ENCODE measurements at regions of chr11 and their contacts with region 1.

Region 1: DNA sequence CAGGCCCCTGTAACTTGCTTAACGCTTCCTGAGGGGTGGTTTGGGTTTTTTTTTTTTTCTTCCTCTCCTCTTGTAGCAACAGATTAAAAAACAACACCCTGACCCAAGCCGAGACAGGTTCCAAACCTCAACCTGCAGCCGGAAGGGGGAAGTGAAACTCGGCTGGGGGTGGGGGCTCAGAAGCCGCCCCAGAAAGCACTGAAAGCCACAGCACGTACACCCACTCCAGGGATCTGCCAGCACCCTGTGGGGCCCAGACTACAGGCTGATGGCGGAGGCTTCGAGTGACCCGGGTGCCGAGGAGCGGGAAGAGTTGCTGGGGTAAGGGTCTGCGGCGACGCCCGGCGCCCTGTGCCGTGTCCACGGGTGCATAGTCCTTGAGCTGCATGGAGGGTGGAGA is at the start of gene LSP1:
- DNase-seq: peak; percentile 83
- ATAC-seq: peak; percentile 64
- H3K4me3 Mint-ChIP-seq: peak within 1 kb of the TSS; percentile 99
- H3K27ac Mint-ChIP-seq: peak within 1 kb of the TSS; percentile 98
- H3K4me1 Mint-ChIP-seq: peaks cover 84% of the 10 kb centered on the region
- H3K27me3 Mint-ChIP-seq: no peaks in the 10 kb centered on the region
- CTCF ChIP-seq: no peak
- total RNA-seq, gene LSP1: 301 and 303 TPM in 2 replicates

Region 2: DNA sequence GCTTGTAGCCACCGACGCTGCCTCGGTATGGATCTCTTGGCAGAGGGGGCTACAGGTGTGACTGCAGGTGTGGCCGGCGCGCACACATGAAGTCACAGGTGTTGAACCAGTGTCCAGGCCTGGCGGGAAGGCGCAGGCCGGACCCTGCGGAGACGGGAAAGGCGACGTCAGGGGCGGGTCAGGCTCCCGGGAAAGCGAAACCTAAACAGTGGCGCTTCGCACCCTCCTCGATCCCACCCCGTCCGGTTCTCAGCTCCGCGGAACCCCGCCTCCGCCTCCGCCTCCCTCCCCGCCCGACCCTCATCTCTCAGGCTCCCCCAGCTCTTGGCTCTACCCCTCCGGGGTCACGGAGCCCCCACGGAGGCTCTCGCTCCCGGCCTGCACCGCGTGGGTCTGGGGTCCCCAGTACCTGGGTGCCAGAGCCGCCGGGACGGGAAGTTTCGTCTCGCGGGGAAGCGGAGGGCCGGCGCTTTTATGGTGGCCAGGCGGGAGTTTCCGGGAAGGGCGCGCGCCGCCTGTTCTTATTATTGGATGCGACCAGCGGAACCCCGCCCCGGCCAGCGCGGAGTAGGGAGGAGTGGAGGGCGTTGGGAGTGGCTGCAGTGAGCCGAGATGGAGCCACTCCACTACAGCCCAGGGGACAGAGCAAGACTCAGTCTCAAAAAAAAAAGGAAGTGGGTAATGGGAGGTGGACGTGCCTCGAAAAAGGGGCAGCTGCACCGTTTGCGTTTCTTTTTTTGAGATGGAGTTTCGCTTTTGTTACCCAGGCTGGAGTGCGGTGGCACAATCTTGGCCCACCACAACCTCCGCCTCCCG is 1237.2 kb before region 1 on chr11 and contains the start of gene IRF7:
- CTCF ChIA-PET with region 1: no interaction called
- POLR2A ChIA-PET with region 1: no interaction called
- intact Hi-C with region 1: loop called (anchors 10 kb)
- DNase-seq: peak; percentile 92
- ATAC-seq: peak; percentile 95
- H3K4me3 Mint-ChIP-seq: peak within 1 kb of the TSS; percentile 90
- H3K27ac Mint-ChIP-seq: peak within 1 kb of the TSS; percentile 88
- H3K4me1 Mint-ChIP-seq: peaks cover 25% of the 10 kb centered on the region
- H3K27me3 Mint-ChIP-seq: no peaks in the 10 kb centered on the region
- CTCF ChIP-seq: no peak
- total RNA-seq, gene IRF7: 74.1 and 75.5 TPM in 2 replicates

Region 3: DNA sequence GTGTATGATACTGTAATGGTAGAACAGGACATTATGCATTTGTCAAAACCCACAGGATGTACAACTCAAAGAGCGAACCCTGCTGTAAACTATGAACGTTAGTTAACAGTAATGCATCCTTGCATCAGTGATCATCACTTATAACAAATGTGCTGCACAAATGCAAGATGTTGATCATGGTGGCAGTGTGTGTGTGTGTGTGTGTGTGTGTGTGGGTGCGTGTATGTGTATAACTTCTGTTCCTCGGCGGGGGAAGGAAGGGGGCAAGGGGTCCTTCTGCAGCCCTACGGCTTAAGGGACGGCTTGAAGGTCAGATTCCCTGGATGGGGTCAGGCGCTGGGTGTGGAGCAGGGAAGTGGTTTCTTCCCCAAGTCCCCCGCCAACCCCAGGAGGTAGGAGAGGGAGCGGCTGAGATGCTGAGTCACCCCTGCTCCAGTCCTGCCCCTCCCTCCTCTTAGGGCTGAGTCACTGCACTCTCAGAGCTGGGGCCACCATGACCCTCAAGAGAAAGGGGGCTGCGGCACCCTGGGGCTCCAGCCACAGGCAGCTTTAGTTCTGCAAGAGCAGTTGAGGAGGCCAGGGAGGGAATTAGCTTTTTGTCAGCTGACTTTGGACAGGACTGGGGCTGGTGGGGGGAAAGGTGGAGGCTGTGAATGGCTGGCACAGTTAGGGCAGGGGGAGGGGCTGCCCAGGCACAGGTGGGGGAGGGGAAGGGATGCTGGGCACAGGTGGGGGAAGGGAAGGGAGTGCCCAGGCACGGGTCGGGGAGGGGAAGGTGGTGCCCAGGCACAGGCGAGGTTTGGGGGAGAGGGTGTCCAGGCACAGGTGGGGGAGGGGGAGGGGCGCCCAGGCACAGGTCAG is 80.4 kb before region 1 on chr11:
- CTCF ChIA-PET with region 1: no interaction called
- POLR2A ChIA-PET with region 1: no interaction called
- intact Hi-C with region 1: no loop called
- DNase-seq: no peak
- ATAC-seq: peak; percentile 49
- H3K4me3 Mint-ChIP-seq: no peak overlapping the region
- H3K27ac Mint-ChIP-seq: no peak overlapping the region
- H3K4me1 Mint-ChIP-seq: peaks cover 6% of the 10 kb centered on the region
- H3K27me3 Mint-ChIP-seq: peaks cover 39% of the 10 kb centered on the region
- CTCF ChIP-seq: no peak

Region 4: GRCh38 chr11:1832211-1832919 is 20.5 kb before region 1 on chr11:
- CTCF ChIA-PET with region 1: interaction called, 6 read pairs
- POLR2A ChIA-PET with region 1: interaction called, 10 read pairs
- intact Hi-C with region 1: no loop called
- DNase-seq: peak; percentile 76
- ATAC-seq: peak; percentile 80
- H3K4me3 Mint-ChIP-seq: no peak overlapping the region
- H3K27ac Mint-ChIP-seq: no peak overlapping the region
- H3K4me1 Mint-ChIP-seq: peaks cover 1% of the 10 kb centered on the region
- H3K27me3 Mint-ChIP-seq: peaks cover 20% of the 10 kb centered on the region
- CTCF ChIP-seq: peak; percentile 82

Region 5: GRCh38 chr11:1866776-1867175 is 13.9 kb after region 1 on chr11:
- CTCF ChIA-PET with region 1: no interaction called
- POLR2A ChIA-PET with region 1: interaction called, 13 read pairs
- intact Hi-C with region 1: loop called (anchors 1 kb)
- DNase-seq: no peak
- ATAC-seq: no peak
- H3K4me3 Mint-ChIP-seq: no peak overlapping the region
- H3K27ac Mint-ChIP-seq: no peak overlapping the region
- H3K4me1 Mint-ChIP-seq: peaks cover 61% of the 10 kb centered on the region
- H3K27me3 Mint-ChIP-seq: no peaks in the 10 kb centered on the region
- CTCF ChIP-seq: no peak

Region 6: DNA sequence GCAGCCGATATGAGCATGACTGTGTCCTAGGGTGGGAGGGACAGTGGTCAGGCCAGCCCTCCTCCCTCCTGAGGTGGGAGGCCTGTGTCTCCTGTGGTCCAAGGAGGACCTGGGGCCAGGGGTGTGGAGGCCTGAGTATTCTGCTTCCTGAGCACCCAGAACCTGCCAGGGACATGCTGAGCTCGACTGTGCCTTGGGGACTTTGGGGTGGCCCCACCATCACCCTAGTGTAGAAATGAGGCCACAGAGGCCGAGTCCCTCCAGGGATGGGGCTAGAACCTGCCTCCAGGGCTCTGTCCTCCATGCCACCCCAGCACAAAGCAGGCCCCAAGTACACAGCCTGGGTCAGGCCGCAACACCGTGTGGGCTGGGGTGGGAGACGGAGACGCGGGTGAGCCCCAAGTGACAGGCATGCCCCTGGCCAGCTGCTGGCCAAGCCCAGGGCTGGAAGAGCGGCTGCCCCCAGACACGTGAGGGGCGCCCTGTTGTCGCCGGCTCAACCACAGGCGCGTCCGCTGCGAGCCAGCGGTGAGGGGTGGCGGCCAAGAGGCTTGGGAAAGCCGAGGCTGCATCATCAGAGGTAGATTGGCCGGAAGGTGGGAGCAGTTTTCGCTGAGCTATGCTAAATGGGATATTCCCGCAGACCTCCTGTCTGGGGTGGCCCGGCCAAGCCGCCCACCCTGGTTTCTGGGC is 37.8 kb after region 1 on chr11:
- CTCF ChIA-PET with region 1: interaction called, 3 read pairs
- POLR2A ChIA-PET with region 1: interaction called, 11 read pairs
- intact Hi-C with region 1: no loop called
- DNase-seq: no peak
- ATAC-seq: no peak
- H3K4me3 Mint-ChIP-seq: no peak overlapping the region
- H3K27ac Mint-ChIP-seq: no peak overlapping the region
- H3K4me1 Mint-ChIP-seq: peaks cover 29% of the 10 kb centered on the region
- H3K27me3 Mint-ChIP-seq: no peaks in the 10 kb centered on the region
- CTCF ChIP-seq: no peak

Region 7: DNA sequence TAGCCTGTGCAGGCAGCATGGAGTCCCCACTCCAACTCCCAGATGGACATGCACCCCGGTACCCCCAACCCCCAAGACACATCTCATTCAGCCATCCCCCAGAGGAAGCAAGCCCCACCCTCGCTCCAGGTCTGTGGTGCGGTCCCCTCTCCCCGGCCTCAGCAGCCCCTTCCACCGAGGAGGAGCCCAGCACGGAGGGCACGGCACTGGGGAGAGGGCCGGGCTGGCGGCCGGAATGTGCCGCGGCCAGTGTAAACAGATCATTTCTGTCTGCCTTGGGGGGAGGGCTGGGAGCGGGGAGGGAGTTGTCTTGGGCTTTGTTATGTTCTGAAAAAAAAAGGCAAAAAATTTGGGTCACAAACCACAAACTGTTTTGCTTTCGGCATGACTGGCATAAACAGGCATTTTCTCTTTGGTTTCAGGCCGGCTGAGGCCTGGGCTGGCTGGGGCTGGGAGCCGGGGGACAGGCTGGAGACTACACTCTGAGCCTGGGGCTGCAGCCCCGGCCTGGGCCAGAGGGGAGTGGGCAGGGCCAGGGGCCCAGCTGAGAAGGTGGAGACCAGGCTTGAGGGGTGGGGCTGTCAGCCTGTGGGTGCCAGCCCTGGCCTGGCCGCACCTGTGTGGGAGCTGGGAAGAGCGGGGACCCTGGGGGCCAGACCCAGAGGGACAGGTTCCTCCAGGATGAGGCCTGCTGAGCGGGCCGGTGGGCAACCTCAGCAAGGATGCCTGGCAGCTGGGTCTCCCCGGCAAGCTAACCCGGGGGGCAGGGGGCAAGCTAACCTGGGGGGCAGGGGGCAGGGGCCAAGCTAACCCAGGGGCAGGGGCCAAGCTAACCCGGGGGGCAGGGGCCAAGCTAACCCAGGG is 269.6 kb after region 1 on chr11:
- CTCF ChIA-PET with region 1: no interaction called
- POLR2A ChIA-PET with region 1: no interaction called
- intact Hi-C with region 1: no loop called
- DNase-seq: no peak
- ATAC-seq: no peak
- H3K4me3 Mint-ChIP-seq: no peak overlapping the region
- H3K27ac Mint-ChIP-seq: no peak overlapping the region
- H3K4me1 Mint-ChIP-seq: no peaks in the 10 kb centered on the region
- H3K27me3 Mint-ChIP-seq: peaks cover 29% of the 10 kb centered on the region
- CTCF ChIP-seq: no peak

Region 8: DNA sequence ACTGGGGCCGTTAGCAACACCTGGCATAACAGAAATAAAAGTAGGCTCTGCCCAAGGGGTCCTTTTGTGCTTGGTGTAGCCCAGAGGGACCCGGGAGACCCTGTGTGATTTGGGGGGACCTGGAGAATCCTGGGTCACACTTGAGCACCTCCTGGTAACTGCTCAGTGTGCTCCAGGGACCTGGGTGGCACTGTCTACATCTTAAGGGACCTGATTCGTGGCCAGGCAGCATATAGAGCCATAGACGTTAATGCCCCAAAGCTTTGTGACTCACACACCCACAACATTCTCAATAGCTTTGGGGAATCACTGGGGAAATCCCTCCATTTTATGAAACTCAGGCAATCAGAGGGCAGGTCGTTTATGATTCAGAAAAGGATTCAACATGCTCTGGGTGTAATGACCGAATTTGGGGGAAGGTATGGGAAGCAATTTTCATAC is 289.9 kb after region 1 on chr11:
- CTCF ChIA-PET with region 1: no interaction called
- POLR2A ChIA-PET with region 1: interaction called, 3 read pairs
- intact Hi-C with region 1: loop called (anchors 5 kb)
- DNase-seq: no peak
- ATAC-seq: peak; percentile 83
- H3K4me3 Mint-ChIP-seq: peak overlapping the region; percentile 63
- H3K27ac Mint-ChIP-seq: peak overlapping the region; percentile 53
- H3K4me1 Mint-ChIP-seq: peaks cover 22% of the 10 kb centered on the region
- H3K27me3 Mint-ChIP-seq: peaks cover 47% of the 10 kb centered on the region
- CTCF ChIP-seq: no peak

Region 9: GRCh38 chr11:2382936-2383851 is 530.3 kb after region 1 on chr11:
- CTCF ChIA-PET with region 1: no interaction called
- POLR2A ChIA-PET with region 1: interaction called, 5 read pairs
- intact Hi-C with region 1: loop called (anchors 5 kb)
- DNase-seq: no peak
- ATAC-seq: no peak
- H3K4me3 Mint-ChIP-seq: peak overlapping the region; percentile 58
- H3K27ac Mint-ChIP-seq: peak overlapping the region; percentile 84
- H3K4me1 Mint-ChIP-seq: peaks cover 93% of the 10 kb centered on the region
- H3K27me3 Mint-ChIP-seq: no peaks in the 10 kb centered on the region
- CTCF ChIP-seq: no peak

Measured in activated B cell treated with CpG ODN at 0.5 μM for 24 hours (primary cell).